ENCODE measurements at regions of chr17 and their contacts with region 1.

Region 1: GRCh38 chr17:17940451-17940911 is 31.7 kb downstream of the TOM1L2 start:
- DNase-seq: peak; percentile 59
- H3K4me3 ChIP-seq: no peak overlapping the region
- H3K27ac ChIP-seq: no peak overlapping the region
- H3K4me1 ChIP-seq: peaks cover 54% of the 10 kb centered on the region
- H3K27me3 ChIP-seq: no peaks in the 10 kb centered on the region
- CTCF ChIP-seq: no peak

Region 2: DNA sequence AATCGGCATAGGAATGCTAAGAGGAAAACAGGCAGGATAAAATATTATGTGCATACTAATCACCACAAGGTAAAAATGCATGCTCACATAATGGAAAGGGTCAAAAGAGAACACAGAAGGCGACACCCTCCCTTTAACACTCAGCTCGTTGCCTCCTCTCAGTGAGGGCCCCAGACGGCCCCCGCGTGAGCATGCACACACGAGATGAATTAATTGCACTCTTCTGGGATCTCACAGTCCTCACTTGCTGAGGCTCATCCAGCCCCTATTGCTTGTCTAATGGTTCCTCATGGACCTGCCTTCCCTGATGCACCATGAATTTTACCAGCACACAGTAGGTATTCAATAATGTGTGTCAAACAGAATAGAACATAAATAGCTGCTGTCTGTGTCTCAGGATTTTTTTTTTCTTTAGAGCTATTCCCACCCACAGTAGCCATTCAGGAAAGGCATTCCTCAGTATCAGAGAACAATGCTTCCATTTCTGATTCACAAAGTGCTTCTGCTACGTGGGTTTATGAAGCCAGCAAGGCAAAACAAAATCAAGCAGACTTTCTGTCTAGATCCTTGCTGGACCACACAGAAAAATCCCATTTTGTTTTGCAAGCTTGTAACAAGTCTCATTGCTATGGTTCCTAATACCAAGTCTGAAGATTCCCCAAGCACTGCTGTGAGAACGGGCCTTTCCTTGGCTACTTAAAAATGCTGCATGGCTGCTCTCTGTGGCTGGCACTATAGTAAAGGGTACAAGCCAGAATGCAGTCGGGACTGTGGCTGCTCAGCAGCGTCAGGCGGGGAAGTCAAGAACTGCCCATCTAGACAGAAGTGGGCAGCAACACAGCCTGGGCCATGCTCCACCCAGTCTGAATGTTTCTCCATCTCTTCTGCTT is 11.8 kb before region 1 on chr17:
- CTCF ChIA-PET with region 1: no interaction called
- POLR2A ChIA-PET with region 1: no interaction called
- intact Hi-C with region 1: no loop called
- DNase-seq: no peak
- H3K4me3 ChIP-seq: no peak overlapping the region
- H3K27ac ChIP-seq: no peak overlapping the region
- H3K4me1 ChIP-seq: peaks cover 12% of the 10 kb centered on the region
- H3K27me3 ChIP-seq: no peaks in the 10 kb centered on the region
- CTCF ChIP-seq: no peak

Region 3: GRCh38 chr17:17959520-17960361 is 19.3 kb after region 1 on chr17:
- CTCF ChIA-PET with region 1: interaction called, 17 read pairs
- POLR2A ChIA-PET with region 1: no interaction called
- intact Hi-C with region 1: no loop called
- DNase-seq: no peak
- H3K4me3 ChIP-seq: no peak overlapping the region
- H3K27ac ChIP-seq: no peak overlapping the region
- H3K4me1 ChIP-seq: no peaks in the 10 kb centered on the region
- H3K27me3 ChIP-seq: no peaks in the 10 kb centered on the region
- CTCF ChIP-seq: no peak

Region 4: DNA sequence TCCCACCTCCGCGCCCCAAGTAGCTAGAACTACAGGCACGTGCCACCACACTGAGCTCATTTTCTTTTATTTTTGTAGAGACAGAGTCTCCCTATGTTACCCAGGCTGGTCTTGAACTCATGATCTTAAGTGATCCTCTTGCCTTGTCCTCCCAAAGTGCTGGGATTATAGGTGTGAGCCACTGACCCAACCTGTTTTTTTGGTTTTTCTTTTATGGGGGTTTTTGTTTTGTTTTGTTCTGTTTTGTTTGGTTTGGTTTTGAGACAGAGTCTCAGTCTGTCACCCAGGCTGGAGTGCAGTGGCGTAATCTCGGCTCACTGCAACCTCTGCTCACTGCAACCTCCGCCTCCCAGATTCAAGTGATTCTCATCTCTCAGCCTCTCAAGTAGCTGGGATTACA is 115.1 kb after region 1 on chr17:
- CTCF ChIA-PET with region 1: no interaction called
- POLR2A ChIA-PET with region 1: no interaction called
- intact Hi-C with region 1: no loop called
- DNase-seq: no peak
- H3K4me3 ChIP-seq: no peak overlapping the region
- H3K27ac ChIP-seq: no peak overlapping the region
- H3K4me1 ChIP-seq: no peaks in the 10 kb centered on the region
- H3K27me3 ChIP-seq: no peaks in the 10 kb centered on the region
- CTCF ChIP-seq: no peak